ENCODE measurements at regions of chr16 and their contacts with region 1.

Region 1: GRCh38 chr16:4253394-4254150 is 11.7 kb upstream of the SRL start:
- DNase-seq: peak; percentile 98 to 100 (median 99)
- H3K4me3 ChIP-seq: peak overlapping the region; percentile 52 to 74 (median 59)
- H3K4me3 Mint-ChIP-seq: peak overlapping the region; percentile 91 to 95
- H3K27ac ChIP-seq: peak overlapping the region; percentile 69 to 87
- H3K27ac Mint-ChIP-seq: peak overlapping the region; percentile 90 to 96 (median 94)
- H3K4me1 ChIP-seq: peaks cover 5 to 6% of the 10 kb centered on the region in 2 donors
- H3K4me1 Mint-ChIP-seq: peaks cover 3% of the 10 kb centered on the region
- H3K27me3 ChIP-seq: no peaks in the 10 kb centered on the region
- H3K27me3 Mint-ChIP-seq: peaks cover 0 to 2% (median 0%) of the 10 kb centered on the region in 3 donors
- CTCF ChIP-seq: no peak

Region 2: GRCh38 chr16:3983081-3983520 is 270.5 kb before region 1 on chr16:
- intact Hi-C with region 1: loop called (anchors 2 to 10 kb)
- DNase-seq: peak; percentile 38 to 71 (median 58)
- H3K4me3 ChIP-seq: no peak overlapping the region
- H3K4me3 Mint-ChIP-seq: no peak overlapping the region
- H3K27ac ChIP-seq: no peak overlapping the region
- H3K27ac Mint-ChIP-seq: peak overlapping the region in 1 of 7 donors; percentile 37
- H3K4me1 ChIP-seq: peaks cover 10% of the 10 kb centered on the region in 2 donors
- H3K4me1 Mint-ChIP-seq: peaks cover 15% of the 10 kb centered on the region
- H3K27me3 ChIP-seq: no peaks in the 10 kb centered on the region
- H3K27me3 Mint-ChIP-seq: peaks cover 0 to 1% (median 1%) of the 10 kb centered on the region in 3 donors
- CTCF ChIP-seq: peak; percentile 77

Region 3: DNA sequence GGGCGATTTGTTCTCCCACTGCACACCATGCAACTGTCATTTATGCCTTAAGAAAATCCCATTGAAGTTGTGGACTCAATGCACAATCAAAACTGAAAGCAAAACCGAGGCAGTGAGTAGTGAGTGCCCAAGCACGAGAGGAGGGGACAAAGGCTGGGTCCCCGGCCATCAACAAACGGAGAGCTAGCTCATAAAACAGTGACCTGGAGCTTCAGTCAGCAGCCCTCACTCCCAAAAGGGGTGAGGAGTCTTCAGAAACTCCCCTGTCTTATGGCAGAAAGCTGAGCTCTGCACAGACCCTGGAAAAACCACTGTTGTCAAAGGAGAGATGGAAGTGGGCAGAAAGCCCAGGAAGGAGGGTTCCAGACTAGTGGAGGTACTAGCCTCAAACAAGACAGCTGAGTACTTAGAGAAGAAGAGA is 234.2 kb before region 1 on chr16:
- intact Hi-C with region 1: loop called in 1 of 2 experiments (anchors 10 kb)
- DNase-seq: peak in 2 of 3 donors; percentile 43 to 50
- H3K4me3 ChIP-seq: peak overlapping the region; percentile 10 to 67 (median 51)
- H3K4me3 Mint-ChIP-seq: peak overlapping the region; percentile 76 to 81
- H3K27ac ChIP-seq: peak overlapping the region; percentile 22 to 73
- H3K27ac Mint-ChIP-seq: peak overlapping the region; percentile 64 to 93 (median 88)
- H3K4me1 ChIP-seq: peaks cover 42 to 44% of the 10 kb centered on the region in 2 donors
- H3K4me1 Mint-ChIP-seq: peaks cover 42% of the 10 kb centered on the region
- H3K27me3 ChIP-seq: no peaks in the 10 kb centered on the region
- H3K27me3 Mint-ChIP-seq: peaks cover 0 to 2% (median 2%) of the 10 kb centered on the region in 3 donors
- CTCF ChIP-seq: no peak

Region 4: DNA sequence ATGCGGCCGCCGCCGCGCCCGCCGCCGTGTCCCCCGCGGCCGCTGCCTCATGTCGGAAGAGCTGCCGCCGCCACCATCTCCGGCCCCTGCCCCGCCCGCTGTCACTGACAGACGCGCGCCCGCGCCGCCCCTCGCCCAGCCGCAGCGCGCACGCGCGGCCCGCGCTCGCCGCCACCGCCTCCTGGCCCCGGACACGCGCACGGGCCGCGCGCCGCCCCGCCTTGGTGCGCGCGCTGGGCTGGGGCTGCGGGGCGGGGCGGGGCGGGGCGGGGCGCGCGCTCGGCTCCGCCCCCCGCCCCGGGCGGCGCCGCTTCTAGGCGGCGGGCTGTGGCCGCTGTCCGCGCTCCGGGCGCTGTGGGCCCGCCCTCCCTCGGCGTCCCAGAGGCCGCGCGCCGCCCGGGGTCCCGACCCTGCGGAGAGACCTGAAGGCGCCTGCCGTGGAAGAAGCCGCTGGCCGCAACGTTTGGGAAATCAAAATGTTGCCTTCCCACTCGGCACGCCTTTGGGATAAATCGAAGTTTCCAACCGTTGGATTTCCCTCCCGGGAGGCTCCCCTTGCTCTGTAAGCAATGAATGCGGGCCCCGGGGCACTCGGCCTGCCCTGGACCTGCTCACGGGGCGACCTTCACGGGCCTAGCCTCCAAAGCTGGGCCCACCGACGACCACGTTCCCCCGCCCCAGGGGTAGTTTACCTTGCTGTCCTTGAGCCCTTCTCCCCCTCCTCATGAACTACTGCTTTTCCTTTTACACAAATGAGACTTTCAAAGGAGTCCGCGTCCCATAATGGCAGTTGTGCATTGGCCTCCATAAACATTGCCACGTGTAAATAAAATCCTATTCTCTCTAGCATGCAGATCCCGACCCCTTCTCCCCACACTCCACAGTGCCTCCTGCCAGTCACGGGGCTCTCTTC is 137.0 kb before region 1 on chr16 and contains the start of gene ADCY9:
- intact Hi-C with region 1: loop called (anchors 5 kb)
- DNase-seq: peak; percentile 66 to 86 (median 73)
- H3K4me3 ChIP-seq: peak within 1 kb of the TSS; percentile 57 to 80 (median 60)
- H3K4me3 Mint-ChIP-seq: peak within 1 kb of the TSS; percentile 79 to 94
- H3K27ac ChIP-seq: peak within 1 kb of the TSS in 1 of 2 donors; percentile 41
- H3K27ac Mint-ChIP-seq: peak within 1 kb of the TSS in 5 of 7 donors; percentile 27 to 82 (median 35)
- H3K4me1 ChIP-seq: peaks cover 41 to 46% of the 10 kb centered on the region in 2 donors
- H3K4me1 Mint-ChIP-seq: peaks cover 43% of the 10 kb centered on the region
- H3K27me3 ChIP-seq: no peaks in the 10 kb centered on the region
- H3K27me3 Mint-ChIP-seq: peaks cover 7 to 17% (median 10%) of the 10 kb centered on the region in 3 donors
- CTCF ChIP-seq: no peak
- polyA plus RNA-seq, gene ADCY9: 0.44 to 9.3 (median 0.67) TPM

Region 5: DNA sequence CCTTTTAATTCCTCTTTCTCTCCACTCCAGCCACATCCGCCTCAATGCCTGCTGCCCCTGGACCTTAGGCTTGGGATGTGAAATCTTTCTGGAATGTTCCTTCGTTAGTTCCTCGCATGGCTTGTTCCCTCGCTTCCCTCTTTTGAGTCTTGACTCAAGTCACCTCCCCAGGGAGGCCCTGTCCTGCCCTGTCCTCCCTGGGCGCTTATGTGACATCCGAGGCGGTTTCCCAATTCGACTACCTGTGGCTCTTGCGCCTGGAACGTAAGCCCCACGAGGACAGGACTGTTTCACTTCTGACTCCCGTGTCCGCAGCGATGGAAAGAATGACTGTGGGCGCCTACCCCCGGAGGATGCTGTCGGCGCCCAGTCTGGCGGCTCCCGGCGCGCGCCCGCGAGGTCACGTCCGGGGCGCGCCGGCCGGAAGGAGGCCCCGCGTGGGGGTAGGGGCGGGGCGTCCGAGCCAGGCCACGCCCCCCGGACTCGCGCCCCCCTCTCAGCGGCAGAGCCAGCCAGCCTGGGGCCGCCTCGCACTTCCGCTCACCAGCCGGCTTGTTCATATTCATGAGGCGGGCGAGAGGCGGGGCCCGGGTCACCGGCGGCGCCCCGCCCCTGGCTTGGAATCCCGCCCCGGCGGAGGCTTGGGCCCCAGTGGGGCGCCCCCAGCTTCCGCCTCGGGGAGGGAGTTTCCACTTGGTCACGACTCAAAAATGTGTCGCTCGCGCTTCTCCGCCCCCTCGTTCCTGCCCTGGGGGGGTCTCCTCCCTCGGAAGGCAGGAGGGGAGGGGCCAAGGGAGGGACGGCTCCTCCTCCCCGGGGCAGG is 53.9 kb after region 1 on chr16:
- intact Hi-C with region 1: loop called in 1 of 2 experiments (anchors 5 kb)
- DNase-seq: peak; percentile 94 to 96 (median 95)
- H3K4me3 ChIP-seq: peak overlapping the region; percentile 60 to 81 (median 69)
- H3K4me3 Mint-ChIP-seq: peak overlapping the region; percentile 90 to 95
- H3K27ac ChIP-seq: peak overlapping the region; percentile 85 to 93
- H3K27ac Mint-ChIP-seq: peak overlapping the region; percentile 94 to 99 (median 97)
- H3K4me1 ChIP-seq: peaks cover 15 to 22% of the 10 kb centered on the region in 2 donors
- H3K4me1 Mint-ChIP-seq: peaks cover 28% of the 10 kb centered on the region
- H3K27me3 ChIP-seq: peaks cover 0 to 4% of the 10 kb centered on the region in 2 donors
- H3K27me3 Mint-ChIP-seq: peaks cover 5 to 18% (median 8%) of the 10 kb centered on the region in 3 donors
- CTCF ChIP-seq: no peak